Calu3 (cell line): ENCODE measurements at regions of chr16 and their contacts with region 1.

Region 1: GRCh38 chr16:74862741-74863244 is 88.2 kb upstream of the FA2H start:
- DNase-seq: peak; percentile 45
- H3K4me3 Mint-ChIP-seq: no peak overlapping the region
- H3K27ac Mint-ChIP-seq: peak overlapping the region; percentile 26
- H3K4me1 Mint-ChIP-seq: peaks cover 9% of the 10 kb centered on the region
- H3K27me3 Mint-ChIP-seq: no peaks in the 10 kb centered on the region
- CTCF ChIP-seq: peak; percentile 91

Region 2: GRCh38 chr16:74700438-74701225 is 162.2 kb before region 1 on chr16 and contains the start of gene MLKL:
- CTCF ChIA-PET with region 1: interaction called, 22 read pairs
- intact Hi-C with region 1: no loop called
- DNase-seq: peak; percentile 78
- H3K4me3 Mint-ChIP-seq: peak within 1 kb of the TSS; percentile 91
- H3K27ac Mint-ChIP-seq: peak within 1 kb of the TSS; percentile 85
- H3K4me1 Mint-ChIP-seq: peaks cover 37% of the 10 kb centered on the region
- H3K27me3 Mint-ChIP-seq: no peaks in the 10 kb centered on the region
- CTCF ChIP-seq: peak; percentile 31
- total RNA-seq, gene MLKL: 38.8 and 46.1 TPM in 2 replicates

Region 3: GRCh38 chr16:74709441-74709877 is 153.3 kb before region 1 on chr16:
- CTCF ChIA-PET with region 1: interaction called, 9 read pairs
- intact Hi-C with region 1: loop called (anchors 1 kb)
- DNase-seq: peak; percentile 89
- H3K4me3 Mint-ChIP-seq: no peak overlapping the region
- H3K27ac Mint-ChIP-seq: peak overlapping the region; percentile 24
- H3K4me1 Mint-ChIP-seq: peaks cover 11% of the 10 kb centered on the region
- H3K27me3 Mint-ChIP-seq: no peaks in the 10 kb centered on the region
- CTCF ChIP-seq: peak; percentile 97

Region 4: DNA sequence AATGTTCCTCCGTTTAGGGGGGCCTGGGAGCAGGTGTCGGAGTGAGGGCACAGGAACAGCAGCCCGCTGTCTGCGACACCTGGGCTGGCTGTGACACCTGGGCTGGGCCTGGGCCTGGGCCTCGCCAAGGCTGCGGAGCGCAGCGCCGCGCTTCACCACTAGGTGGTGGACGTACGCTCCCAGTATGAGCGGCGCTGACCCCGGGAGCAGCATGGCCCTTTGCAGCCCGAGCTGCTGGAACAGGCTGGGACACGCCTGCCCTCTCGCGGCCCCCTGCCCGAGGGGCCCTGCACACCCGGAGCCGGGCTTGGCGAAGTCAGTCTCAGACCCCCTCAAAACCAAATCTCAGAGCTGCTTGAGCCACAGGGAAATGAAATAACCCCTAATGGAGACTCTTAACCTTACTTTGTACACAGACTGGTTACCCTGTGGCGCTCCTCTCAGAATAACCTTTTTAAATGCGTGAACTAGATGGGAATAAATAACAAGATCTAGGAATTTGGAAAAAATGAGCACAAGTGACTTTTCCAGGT is 49.6 kb before region 1 on chr16:
- CTCF ChIA-PET with region 1: interaction called, 22 read pairs
- intact Hi-C with region 1: loop called (anchors 1 kb)
- DNase-seq: peak; percentile 96
- H3K4me3 Mint-ChIP-seq: no peak overlapping the region
- H3K27ac Mint-ChIP-seq: peak overlapping the region; percentile 24
- H3K4me1 Mint-ChIP-seq: peaks cover 9% of the 10 kb centered on the region
- H3K27me3 Mint-ChIP-seq: peaks cover 30% of the 10 kb centered on the region
- CTCF ChIP-seq: peak; percentile 97

Region 5: DNA sequence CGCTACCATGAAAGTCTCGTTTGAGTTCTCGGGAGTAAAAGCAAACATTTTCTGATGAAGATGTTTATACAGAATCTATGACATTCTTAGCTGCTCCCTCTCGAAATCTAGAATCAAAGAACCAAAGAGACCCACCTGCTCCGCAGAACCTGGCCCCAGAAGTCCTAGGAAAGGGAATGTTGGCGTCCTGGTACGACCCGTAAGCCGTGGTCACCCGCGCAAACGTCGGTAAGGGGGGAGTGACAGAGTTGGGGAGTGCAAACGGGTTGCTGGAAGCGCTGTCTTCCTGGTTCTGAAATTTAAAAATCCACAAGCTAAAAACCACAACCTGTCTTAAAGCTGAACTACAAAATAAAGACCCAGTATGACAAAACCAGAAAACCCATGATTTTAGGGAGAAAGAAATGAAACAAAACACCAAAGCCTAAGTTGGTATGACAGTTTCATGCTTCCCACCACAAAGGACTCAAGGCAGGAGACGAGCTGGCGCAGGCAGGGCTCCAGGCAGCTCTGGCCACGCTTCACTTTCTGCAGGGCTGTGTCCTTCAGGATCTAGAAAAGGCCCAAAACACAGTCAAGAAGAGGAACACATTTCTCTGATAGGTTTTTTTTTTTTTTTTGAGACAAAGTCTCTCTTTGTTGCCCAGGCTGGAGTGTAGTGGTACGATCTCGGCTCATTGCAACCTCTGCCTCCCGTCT is 46.7 kb after region 1 on chr16:
- CTCF ChIA-PET with region 1: no interaction called
- intact Hi-C with region 1: no loop called
- DNase-seq: no peak
- H3K4me3 Mint-ChIP-seq: no peak overlapping the region
- H3K27ac Mint-ChIP-seq: no peak overlapping the region
- H3K4me1 Mint-ChIP-seq: no peaks in the 10 kb centered on the region
- H3K27me3 Mint-ChIP-seq: no peaks in the 10 kb centered on the region
- CTCF ChIP-seq: no peak